ENCODE measurements at regions of chr10 and their contacts with region 1.

Region 1: DNA sequence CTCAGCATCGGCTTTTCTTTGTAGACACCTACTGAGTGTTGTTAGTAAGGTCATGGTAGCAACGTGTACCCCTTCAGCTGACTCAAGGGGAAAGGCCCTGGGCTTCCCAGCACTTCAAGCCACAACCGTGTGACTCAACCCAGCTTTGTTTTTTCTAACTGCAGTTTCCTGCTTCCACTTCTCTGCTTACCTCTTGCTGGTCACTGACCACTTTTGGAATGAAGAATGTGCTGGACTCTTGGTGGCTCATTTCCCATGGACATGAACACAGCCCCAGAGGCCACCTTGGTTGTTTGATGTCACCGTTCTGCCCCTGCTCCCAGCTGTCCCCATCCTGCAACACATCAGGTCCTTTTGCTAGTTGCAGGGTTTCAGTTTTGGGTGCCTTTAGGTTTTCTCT is 69.5 kb upstream of the ZNF438 start:
- DNase-seq: peak; percentile 89
- H3K4me3 Mint-ChIP-seq: peak overlapping the region; percentile 8
- H3K27ac Mint-ChIP-seq: peak overlapping the region; percentile 92
- H3K4me1 Mint-ChIP-seq: peaks cover 48% of the 10 kb centered on the region
- H3K27me3 Mint-ChIP-seq: no peaks in the 10 kb centered on the region

Region 2: DNA sequence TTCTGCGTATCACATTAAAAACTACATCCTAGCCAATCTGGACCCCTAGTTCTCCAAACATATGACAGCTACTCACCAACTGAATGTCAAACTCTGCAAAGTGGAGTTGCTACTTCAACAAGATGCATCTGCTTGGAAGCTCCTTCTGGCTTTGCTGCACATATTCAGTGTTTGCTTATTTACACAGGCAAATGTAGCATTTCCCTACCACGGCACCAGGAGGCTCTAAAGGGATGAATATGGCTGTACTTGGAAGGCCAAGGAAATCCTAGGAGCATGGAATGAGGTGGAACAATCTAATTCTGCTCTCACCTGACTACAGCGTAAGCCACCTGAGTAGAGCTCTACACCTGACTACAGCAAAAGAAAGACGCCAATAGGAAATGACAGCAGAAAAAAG is 791.7 kb before region 1 on chr10:
- CTCF ChIA-PET with region 1: no interaction called
- POLR2A ChIA-PET with region 1: no interaction called
- intact Hi-C with region 1: no loop called
- DNase-seq: no peak
- H3K4me3 Mint-ChIP-seq: no peak overlapping the region
- H3K27ac Mint-ChIP-seq: no peak overlapping the region
- H3K4me1 Mint-ChIP-seq: no peaks in the 10 kb centered on the region
- H3K27me3 Mint-ChIP-seq: no peaks in the 10 kb centered on the region

Region 3: DNA sequence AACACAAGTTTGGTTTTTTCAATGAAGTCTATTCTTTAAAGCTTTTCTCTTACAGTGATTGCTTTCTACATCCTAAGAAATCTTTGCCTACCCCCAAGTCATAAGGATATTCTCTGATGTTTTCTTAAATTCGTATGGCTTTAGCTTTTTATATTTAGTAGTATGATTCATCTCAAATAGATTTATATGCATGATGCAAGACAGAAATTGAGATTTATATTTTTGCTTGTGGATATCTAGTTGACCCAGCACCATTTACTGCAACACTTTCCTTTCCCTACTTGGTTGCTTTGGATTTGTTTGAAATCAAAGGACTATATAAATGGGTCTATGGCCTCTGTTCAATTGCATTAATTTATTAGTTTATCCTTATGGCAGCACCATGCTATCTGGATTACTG is 183.3 kb before region 1 on chr10:
- CTCF ChIA-PET with region 1: no interaction called
- POLR2A ChIA-PET with region 1: no interaction called
- intact Hi-C with region 1: no loop called
- DNase-seq: no peak
- H3K4me3 Mint-ChIP-seq: no peak overlapping the region
- H3K27ac Mint-ChIP-seq: no peak overlapping the region
- H3K4me1 Mint-ChIP-seq: no peaks in the 10 kb centered on the region
- H3K27me3 Mint-ChIP-seq: no peaks in the 10 kb centered on the region

Region 4: DNA sequence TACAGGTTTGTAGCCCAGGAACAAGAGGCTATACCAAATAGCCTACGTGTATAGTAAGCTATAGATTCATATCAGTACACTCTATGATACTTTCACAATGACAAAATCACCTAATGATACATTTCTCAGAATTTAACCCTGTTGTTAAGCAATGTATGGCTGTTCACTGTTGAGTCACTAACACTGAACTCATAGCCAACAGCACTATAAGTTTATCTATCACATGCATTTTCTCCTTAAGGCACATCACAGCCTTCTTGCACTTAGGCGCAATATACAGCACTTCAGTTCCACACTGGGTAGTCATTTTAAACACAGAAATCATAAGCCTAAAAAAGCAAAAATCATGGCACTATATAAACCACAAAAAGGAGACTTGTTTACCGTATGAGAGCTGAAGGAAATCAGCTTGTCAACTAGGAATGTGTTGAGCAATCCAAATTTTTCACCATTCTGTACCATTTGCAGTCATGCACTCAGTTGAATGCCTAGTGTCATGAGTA is 115.0 kb before region 1 on chr10:
- CTCF ChIA-PET with region 1: no interaction called
- POLR2A ChIA-PET with region 1: no interaction called
- intact Hi-C with region 1: loop called (anchors 5 kb)
- DNase-seq: no peak
- H3K4me3 Mint-ChIP-seq: no peak overlapping the region
- H3K27ac Mint-ChIP-seq: peak overlapping the region; percentile 76
- H3K4me1 Mint-ChIP-seq: peaks cover 15% of the 10 kb centered on the region
- H3K27me3 Mint-ChIP-seq: no peaks in the 10 kb centered on the region

Region 5: DNA sequence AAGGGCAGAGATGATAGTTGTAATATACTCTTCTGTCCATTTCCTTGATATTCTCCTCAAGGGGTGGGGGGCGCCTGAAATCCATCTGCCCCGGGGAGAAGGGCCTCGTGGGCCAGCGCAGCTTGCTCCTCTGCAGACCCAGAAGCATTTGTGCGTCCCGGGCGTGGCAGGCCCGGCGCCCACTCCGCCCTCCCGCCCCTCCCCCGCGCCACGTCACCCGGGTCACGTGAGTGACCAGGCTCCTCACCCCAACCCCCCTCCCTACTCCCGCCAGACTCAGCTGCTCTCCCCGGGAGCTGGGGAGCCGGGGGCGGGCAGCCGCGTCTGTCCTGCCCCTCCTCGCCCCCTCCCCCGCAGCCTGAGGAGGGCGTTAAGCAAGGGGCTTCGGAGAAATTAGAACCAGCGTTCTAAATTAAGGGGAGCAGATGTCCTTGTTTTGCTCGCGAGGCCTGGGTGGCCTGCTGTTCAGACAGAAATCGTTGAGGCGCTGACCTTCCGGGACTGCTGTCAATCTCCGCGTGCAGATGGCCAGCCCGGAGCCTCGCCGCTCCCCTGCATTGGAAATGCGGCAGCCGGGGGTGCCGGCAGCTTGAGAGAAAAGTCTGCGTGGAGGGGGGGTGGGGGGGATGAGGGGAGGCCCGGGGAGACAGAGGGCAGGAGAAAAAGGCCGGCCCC is 32.6 kb after region 1 on chr10:
- CTCF ChIA-PET with region 1: no interaction called
- POLR2A ChIA-PET with region 1: no interaction called
- intact Hi-C with region 1: loop called (anchors 1 kb)
- DNase-seq: peak; percentile 83
- H3K4me3 Mint-ChIP-seq: peak overlapping the region; percentile 65
- H3K27ac Mint-ChIP-seq: peak overlapping the region; percentile 62
- H3K4me1 Mint-ChIP-seq: peaks cover 42% of the 10 kb centered on the region
- H3K27me3 Mint-ChIP-seq: no peaks in the 10 kb centered on the region

Region 6: GRCh38 chr10:31707093-31708039 is 606.2 kb after region 1 on chr10:
- CTCF ChIA-PET with region 1: no interaction called
- POLR2A ChIA-PET with region 1: no interaction called
- intact Hi-C with region 1: loop called (anchors 5 kb)
- DNase-seq: peak; percentile 81
- H3K4me3 Mint-ChIP-seq: peak overlapping the region; percentile 23
- H3K27ac Mint-ChIP-seq: peak overlapping the region; percentile 84
- H3K4me1 Mint-ChIP-seq: peaks cover 24% of the 10 kb centered on the region
- H3K27me3 Mint-ChIP-seq: no peaks in the 10 kb centered on the region